ENCODE measurements at regions of chr13 and their contacts with region 1.

Region 1: DNA sequence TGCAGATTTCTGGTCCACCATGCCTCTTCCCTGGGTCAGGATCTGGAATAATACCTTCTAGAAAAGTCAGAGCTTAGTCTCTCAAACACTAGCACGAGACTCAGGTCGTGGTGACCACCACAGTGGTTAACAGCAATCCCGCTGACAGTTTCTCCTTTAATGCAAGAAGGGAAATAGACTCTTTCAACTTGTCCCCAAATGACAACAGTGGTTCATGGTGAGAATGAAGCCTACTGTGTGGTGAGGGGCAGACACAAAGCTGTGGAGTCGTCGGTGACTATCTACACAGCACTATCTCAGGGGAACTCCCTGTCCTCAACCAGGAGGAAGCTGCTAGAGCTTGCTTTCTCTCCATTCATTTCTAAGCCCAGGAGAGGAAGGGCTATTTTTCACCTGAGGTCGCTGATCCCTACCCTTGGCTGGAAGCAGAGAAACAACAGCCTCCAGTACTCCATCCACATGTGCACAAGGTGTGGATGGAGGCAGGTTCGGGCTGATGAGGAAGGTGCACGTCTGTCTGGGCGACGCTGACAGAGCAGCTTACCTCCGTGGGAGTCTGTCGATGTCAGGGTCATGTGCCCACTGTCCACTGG is 72.4 kb downstream of the STK24 start:
- DNase-seq: no peak
- ATAC-seq: no peak
- H3K4me3 ChIP-seq: no peak overlapping the region
- H3K27ac ChIP-seq: no peak overlapping the region
- H3K4me1 ChIP-seq: peaks cover 45% of the 10 kb centered on the region
- H3K27me3 ChIP-seq: no peaks in the 10 kb centered on the region

Region 2: GRCh38 chr13:98570929-98571372 is 66.5 kb after region 1 on chr13:
- intact Hi-C with region 1: loop called in 2 of 4 experiments (anchors 5 to 10 kb)
- DNase-seq: no peak
- ATAC-seq: peak; percentile 46 to 55
- H3K4me3 ChIP-seq: peak overlapping the region; percentile 46
- H3K27ac ChIP-seq: peak overlapping the region; percentile 61
- H3K4me1 ChIP-seq: peaks cover 26% of the 10 kb centered on the region
- H3K27me3 ChIP-seq: no peaks in the 10 kb centered on the region